WTC11 (cell line): ENCODE measurements at regions of chr14 and their contacts with region 1.

Region 1: DNA sequence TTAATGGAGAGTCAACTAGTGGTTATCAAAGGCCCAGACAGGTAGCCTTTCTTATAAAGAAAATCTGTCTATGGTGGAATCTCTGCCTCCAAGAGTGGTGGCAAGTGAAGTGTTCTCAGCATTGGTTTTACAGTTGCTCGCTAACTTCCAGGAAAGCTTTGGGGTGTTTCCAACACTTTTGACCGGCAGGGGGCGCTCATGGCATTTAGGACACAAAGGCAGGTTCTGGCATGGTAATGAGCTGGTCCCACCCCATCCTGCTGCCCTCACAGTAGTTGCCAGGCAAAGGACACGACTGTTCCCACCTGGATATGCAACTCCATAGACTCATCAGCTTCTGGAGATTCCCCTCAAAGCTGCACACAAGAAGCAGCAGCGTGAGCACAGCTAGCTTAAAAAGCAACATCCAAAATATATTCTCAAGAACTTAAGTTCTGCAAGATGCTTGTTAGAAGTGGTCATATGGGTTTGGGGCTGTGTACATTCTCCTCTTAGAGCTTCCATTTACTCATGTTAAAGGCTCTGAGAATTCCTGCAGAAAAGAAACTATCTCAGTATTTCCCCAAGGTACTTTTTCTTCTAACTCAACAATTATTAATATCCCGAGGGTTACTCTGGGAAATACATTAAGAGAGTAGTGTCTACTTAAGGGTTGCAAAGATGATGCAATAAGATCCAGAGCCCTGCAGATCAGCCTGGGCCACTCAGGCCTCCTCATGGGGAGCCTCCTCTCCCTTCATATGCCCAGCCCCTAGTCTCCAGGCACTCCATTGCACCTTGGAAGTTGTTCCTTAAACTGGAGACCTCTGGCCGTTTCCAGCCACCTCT is 14.8 kb downstream of the PROX2 start:
- DNase-seq: peak; percentile 95
- ATAC-seq: peak; percentile 95
- H3K4me3 Mint-ChIP-seq: no peak overlapping the region
- H3K27ac Mint-ChIP-seq: no peak overlapping the region
- H3K4me1 Mint-ChIP-seq: peaks cover 3% of the 10 kb centered on the region; the same call in 1 of the 2 replicates
- H3K27me3 Mint-ChIP-seq: no peaks in the 10 kb centered on the region; the same call in none of the 2 replicates
- CTCF ChIP-seq: peak; percentile 77

Region 2: DNA sequence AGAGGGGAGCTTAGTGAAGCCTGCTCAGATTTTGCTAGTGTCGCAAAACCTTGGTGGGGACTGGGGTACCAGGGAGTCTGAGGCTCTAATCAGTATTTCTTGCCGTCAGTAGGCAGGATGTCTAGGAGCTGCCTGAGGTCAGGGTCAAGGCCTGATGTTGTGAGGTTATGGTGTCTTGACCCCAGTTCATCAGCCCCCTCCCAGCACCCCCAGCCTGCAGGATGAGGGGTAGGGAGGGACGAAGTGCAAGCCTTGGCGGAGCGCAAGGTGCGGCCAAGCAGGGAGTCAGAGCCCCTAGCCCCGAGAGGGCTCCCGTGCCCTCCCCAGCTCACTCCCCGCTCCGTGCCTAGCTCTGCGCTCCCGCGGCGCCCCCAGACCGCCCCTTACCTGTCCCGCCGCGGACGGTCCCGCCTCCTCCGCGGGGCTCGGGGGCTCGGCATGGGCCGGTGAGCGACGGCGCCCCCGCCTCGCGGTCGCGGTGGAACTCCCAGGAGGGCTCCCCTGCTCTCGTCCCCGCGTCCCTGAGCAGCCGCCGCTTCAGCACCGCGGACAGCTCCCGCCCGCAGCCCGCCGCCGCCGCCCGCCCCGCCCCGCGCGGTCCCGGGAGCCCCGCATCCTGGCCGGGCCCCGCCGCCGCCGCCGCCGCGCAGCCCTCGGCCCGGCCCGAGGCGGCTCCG is 435.5 kb before region 1 on chr14:
- CTCF ChIA-PET with region 1: no interaction called
- POLR2A ChIA-PET with region 1: no interaction called
- DNase-seq: peak; percentile 82
- ATAC-seq: peak; percentile 40
- H3K4me3 Mint-ChIP-seq: peak overlapping the region; percentile 55
- H3K27ac Mint-ChIP-seq: no peak overlapping the region
- H3K4me1 Mint-ChIP-seq: peaks cover 63% of the 10 kb centered on the region
- H3K27me3 Mint-ChIP-seq: peaks cover 22% of the 10 kb centered on the region
- CTCF ChIP-seq: no peak

Region 3: DNA sequence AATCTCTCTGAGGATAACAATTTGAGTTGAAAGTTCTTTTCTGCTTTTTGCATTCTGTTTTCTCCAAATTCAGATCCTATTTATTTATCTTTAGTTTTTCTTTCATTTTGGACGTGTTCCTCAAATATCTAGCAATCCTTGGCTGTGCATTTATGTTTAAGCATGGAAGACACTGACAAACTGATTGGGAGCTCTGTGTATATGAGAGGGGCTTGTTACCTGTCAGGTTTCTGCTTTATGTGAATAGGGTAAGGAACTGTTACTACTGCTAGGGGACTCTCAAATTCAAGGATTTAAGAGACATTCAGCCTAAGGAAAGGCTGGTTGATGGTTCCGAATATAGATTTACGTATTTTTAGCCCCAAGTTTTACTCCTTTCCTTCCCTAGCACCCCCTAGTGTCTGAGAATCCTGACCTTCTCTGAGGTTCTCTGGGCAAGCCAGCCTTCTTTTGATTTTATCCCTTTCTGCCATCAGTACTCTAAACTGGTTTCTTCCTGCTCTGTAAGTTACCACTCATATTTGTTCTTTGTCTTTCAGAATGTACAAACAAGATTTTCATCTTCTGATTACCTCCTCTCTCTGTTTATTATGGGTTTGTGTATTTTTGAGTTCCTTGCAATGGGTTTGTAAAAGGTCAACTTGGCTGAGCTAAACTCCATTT is 67.5 kb before region 1 on chr14:
- CTCF ChIA-PET with region 1: no interaction called
- POLR2A ChIA-PET with region 1: no interaction called
- DNase-seq: no peak
- ATAC-seq: peak; percentile 35; the same call in 1 of the 2 replicates
- H3K4me3 Mint-ChIP-seq: 0 out of 2 replicates have a peak overlapping the region, but pooled peaks have one; percentile 0
- H3K27ac Mint-ChIP-seq: peak overlapping the region; percentile 46; the same call in 1 of the 2 replicates
- H3K4me1 Mint-ChIP-seq: peaks cover 40% of the 10 kb centered on the region
- H3K27me3 Mint-ChIP-seq: no peaks in the 10 kb centered on the region
- CTCF ChIP-seq: no peak

Region 4: GRCh38 chr14:74804219-74804826 is 56.8 kb before region 1 on chr14:
- CTCF ChIA-PET with region 1: interaction called, 10 read pairs
- POLR2A ChIA-PET with region 1: no interaction called
- DNase-seq: no peak
- ATAC-seq: peak; percentile 48; the same call in 1 of the 2 replicates
- H3K4me3 Mint-ChIP-seq: no peak overlapping the region
- H3K27ac Mint-ChIP-seq: no peak overlapping the region; the same call in 1 of the 2 replicates
- H3K4me1 Mint-ChIP-seq: no peaks in the 10 kb centered on the region
- H3K27me3 Mint-ChIP-seq: no peaks in the 10 kb centered on the region
- CTCF ChIP-seq: no peak

Region 5: DNA sequence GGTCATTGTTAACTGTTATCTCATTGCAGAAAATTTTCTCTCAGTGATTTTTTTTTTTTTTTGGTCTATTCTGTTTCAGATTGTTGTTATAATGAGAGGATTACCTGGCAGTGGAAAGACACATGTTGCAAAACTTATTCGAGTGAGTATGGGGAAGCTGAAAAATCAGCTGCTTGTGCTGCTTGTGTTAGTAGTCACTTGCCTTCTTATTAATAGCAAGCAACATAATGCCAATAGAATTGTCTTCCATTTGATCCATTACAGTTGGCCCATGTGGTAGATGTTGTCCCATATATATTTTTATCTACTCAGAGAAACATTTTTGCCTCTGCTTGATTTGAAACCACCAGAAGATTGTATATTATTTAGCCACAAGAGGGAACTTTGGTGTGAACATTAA is 45.0 kb before region 1 on chr14:
- CTCF ChIA-PET with region 1: no interaction called
- POLR2A ChIA-PET with region 1: no interaction called
- DNase-seq: no peak
- ATAC-seq: no peak
- H3K4me3 Mint-ChIP-seq: no peak overlapping the region
- H3K27ac Mint-ChIP-seq: no peak overlapping the region
- H3K4me1 Mint-ChIP-seq: peaks cover 5% of the 10 kb centered on the region
- H3K27me3 Mint-ChIP-seq: no peaks in the 10 kb centered on the region
- CTCF ChIP-seq: no peak

Region 6: DNA sequence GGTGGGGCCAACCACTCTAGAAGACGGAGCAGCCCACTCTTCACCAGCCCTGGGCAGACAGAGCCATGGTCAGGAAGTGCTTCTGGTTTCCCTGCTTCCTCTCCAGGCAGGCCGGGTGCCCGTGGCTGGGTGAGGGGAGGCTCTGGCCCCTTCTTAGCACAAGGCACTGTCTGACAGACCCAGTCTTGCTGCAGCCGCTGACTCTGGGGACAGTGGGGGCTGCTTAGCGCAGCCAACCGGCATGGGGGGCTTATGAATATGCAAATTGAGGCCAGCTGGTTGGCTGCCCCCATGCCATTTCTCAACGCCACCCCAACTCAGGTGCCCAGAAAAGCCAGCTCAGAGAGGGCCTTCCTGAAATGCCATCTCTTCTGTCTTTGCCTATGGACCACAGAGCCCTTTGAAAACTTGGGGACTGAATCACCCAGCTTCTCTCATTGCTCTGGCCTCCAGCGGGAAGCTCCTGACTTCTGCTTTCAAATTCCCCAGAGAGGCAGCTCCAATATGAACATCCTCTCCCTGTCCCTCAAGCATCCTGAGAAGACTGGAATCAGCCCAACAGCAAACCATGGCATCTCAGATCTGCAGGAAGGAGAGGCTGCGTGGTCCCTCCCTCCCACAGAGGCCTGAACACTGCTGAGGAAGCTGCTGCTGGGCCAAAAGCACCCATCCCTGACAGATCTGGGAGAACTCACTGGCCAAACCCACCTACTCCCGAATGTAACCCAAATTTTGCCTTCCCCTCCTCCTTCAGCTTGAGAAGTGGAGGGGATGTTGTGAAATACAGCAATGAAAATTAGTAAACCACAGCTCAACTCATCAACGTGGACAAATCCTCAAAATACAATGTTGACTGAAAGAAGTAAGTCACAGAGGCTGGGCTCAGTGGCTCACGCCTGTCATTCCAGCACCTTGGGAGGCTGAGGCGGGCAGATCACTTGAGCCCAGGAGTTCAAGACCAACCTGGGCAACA is 15.1 kb after region 1 on chr14 and contains the start of gene PROX2:
- CTCF ChIA-PET with region 1: interaction called, 133 read pairs
- POLR2A ChIA-PET with region 1: interaction called, 3 read pairs
- DNase-seq: peak; percentile 28
- ATAC-seq: peak; percentile 71
- H3K4me3 Mint-ChIP-seq: no peak within 1 kb of the TSS
- H3K27ac Mint-ChIP-seq: no peak within 1 kb of the TSS
- H3K4me1 Mint-ChIP-seq: peaks cover 16% of the 10 kb centered on the region
- H3K27me3 Mint-ChIP-seq: no peaks in the 10 kb centered on the region
- CTCF ChIP-seq: no peak
- total RNA-seq, gene PROX2: 0.04 to 0.27 TPM in 2 of 3 replicates, not detected in the other

Region 7: DNA sequence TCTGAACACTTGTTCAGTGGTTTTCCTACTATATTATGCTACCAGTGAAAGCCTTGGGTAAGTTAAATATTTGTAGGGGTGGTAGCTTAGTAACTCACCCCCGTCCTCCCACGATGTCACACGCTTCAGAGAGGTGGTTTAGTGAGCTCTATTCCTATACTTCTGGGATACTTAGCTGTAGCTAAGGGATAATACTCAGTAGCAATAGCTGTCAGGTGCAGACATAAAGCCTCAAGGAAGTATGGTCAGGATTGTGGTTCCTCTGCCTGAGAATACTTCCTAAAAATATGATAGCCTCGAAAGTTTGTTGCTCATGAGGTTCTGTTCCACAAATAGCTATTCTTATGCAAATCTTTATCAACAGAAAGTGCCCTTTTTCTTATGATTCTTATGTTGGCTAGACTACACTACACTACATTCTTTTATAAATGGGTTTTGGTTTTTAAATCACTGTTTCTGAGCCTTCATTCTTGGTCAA is 32.5 kb after region 1 on chr14:
- CTCF ChIA-PET with region 1: interaction called, 18 read pairs
- POLR2A ChIA-PET with region 1: no interaction called
- DNase-seq: no peak
- ATAC-seq: no peak
- H3K4me3 Mint-ChIP-seq: no peak overlapping the region
- H3K27ac Mint-ChIP-seq: no peak overlapping the region
- H3K4me1 Mint-ChIP-seq: peaks cover 3% of the 10 kb centered on the region
- H3K27me3 Mint-ChIP-seq: no peaks in the 10 kb centered on the region
- CTCF ChIP-seq: no peak

Region 8: GRCh38 chr14:74945823-74946682 is 84.9 kb after region 1 on chr14:
- CTCF ChIA-PET with region 1: interaction called, 18 read pairs
- POLR2A ChIA-PET with region 1: no interaction called
- DNase-seq: peak; percentile 92
- ATAC-seq: peak; percentile 84
- H3K4me3 Mint-ChIP-seq: no peak overlapping the region
- H3K27ac Mint-ChIP-seq: 0 out of 2 replicates have a peak overlapping the region, but pooled peaks have one; percentile 34
- H3K4me1 Mint-ChIP-seq: peaks cover 3% of the 10 kb centered on the region
- H3K27me3 Mint-ChIP-seq: no peaks in the 10 kb centered on the region
- CTCF ChIP-seq: peak; percentile 84

Region 9: DNA sequence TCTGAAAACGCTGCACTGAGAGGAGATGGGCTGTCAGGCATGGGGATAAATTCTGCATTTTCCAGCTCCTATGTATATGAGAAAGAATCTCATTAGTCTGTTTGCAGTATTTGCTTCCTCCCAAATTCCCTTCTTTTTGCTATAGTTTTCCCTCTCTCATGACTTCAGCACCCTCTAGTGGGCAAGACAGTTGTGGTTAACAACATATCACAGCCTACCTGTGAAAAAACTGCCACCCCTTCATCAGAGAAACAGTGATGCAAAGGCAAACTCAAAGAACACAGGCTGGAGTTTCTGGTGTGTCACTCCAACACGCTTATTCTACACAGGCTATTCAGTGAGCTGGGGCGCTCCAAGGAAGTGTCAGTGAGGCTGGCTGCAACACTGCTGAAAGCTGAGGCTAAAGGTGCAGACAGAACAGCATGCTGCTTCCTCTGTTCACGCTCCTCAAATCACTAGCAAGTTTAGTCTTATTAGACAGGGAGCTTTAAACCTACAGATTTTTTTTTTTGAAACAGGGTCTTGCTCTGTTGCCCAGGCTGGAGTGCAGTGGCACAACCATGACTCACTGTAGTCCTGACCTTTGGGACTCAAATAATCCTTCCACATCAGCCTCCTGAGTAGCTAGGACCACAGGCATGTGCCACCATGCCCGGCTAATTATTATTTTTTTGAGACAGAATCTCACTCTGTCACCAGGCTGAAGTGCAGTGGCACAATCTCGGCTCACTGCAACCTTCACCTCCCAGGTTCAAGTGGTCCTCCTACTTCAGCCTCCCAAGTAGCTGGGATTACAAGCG is 227.7 kb after region 1 on chr14:
- CTCF ChIA-PET with region 1: interaction called, 28 read pairs
- POLR2A ChIA-PET with region 1: interaction called, 3 read pairs
- DNase-seq: peak; percentile 36
- ATAC-seq: peak; percentile 82
- H3K4me3 Mint-ChIP-seq: no peak overlapping the region
- H3K27ac Mint-ChIP-seq: peak overlapping the region; percentile 53; the same call in 1 of the 2 replicates
- H3K4me1 Mint-ChIP-seq: peaks cover 6% of the 10 kb centered on the region
- H3K27me3 Mint-ChIP-seq: no peaks in the 10 kb centered on the region
- CTCF ChIP-seq: no peak; the same call in 1 of the 2 replicates

Region 10: DNA sequence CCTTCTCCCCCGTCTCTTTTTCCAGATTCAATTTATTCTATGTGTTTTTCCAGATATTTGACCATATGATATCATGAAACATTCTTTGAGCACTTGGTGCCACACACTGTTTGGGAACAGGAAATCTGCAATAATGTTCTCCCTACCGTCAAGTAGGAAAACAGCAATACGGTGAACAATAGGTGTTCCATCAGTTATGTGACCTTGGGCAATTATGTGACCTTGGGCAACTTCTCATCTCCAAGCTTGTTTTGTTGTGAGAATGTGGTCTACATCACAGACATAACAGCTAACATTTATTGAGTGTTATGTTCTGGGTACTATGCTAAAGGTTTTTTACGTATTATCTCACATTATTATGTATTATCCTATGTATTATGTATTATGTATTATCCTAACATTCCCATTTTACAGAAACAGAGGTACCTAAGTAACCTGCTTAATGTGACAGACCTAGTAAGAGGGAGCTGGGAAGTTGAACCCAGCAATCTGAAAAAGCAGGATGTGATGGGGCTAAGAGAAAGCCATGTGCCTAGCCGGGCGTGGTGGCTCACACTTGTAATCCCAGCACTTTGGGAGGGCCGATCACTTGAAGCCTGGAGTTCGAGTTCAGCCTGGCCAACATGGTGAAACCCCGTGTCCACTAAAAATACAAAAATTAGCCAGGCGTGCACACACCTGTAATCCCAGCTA is 266.9 kb after region 1 on chr14:
- CTCF ChIA-PET with region 1: no interaction called
- POLR2A ChIA-PET with region 1: no interaction called
- DNase-seq: no peak
- ATAC-seq: no peak
- H3K4me3 Mint-ChIP-seq: peak overlapping the region; percentile 87
- H3K27ac Mint-ChIP-seq: peak overlapping the region; percentile 86
- H3K4me1 Mint-ChIP-seq: peaks cover 18% of the 10 kb centered on the region
- H3K27me3 Mint-ChIP-seq: no peaks in the 10 kb centered on the region
- CTCF ChIP-seq: no peak